ENCODE measurements at regions of chr10 and their contacts with region 1.

Region 1: DNA sequence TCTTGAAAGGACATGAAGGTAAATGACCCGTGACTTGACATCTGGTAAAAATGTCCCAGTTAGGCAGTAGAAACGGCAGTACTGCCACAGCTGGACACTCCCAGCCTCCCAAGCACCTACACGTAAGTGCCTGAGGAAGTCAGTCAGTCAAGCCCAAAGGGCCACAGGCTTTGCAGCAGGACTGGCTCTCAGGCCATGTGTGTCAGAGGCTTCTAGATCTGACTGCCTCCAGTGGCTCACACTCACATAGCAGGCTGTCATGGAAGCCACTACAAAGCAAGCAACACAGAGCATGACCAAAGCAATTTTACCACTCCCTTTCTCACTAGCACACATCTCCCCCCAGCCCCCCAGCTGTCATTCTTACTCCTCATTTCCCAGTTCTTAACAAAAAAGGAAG is 17.8 kb upstream of the CCNJ start:
- DNase-seq: peak; percentile 18 to 46
- ATAC-seq: peak; percentile 97 to 98
- H3K4me3 ChIP-seq: no peak overlapping the region
- H3K27ac ChIP-seq: no peak overlapping the region
- H3K4me1 ChIP-seq: no peaks in the 10 kb centered on the region
- CTCF ChIP-seq: no peak
- EP300 ChIP-seq: no peak
- POLR2A ChIP-seq: no peak
- RAD21 ChIP-seq: no peak

Region 2: DNA sequence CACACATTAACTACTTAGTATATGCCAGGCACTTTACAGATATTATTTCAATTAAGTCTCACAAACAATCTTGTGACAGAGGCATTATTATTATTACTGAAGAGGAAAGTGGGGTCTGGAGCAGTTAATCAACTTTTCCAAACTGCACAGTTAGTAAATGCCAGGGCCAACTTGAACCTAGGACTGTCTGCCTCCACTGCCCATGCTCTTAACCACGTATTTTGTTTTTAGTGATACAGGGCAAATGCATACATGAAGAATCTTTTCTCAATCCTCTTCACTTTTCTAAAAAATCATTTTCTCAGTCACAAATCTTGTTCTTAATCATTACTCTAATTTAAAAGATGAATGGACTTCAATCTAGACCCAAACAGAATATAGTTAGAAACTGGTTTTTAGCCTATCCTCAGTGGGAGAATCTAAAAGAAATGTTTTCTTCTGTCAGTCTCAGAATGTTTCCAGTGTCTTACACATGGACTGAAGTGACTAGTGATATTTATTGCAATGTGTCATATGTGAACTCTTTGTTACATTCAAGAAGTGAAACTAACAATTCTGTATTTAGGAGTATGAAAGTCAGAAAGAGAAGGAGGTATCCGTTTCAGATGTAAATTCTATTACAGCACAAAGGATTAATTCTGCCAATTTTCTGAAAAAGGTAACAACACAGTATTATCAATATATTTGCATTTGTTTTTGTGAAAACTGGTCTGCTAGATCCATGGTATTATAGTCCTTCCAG is 37.7 kb before region 1 on chr10:
- CTCF ChIA-PET with region 1: no interaction called
- POLR2A ChIA-PET with region 1: no interaction called
- DNase-seq: no peak
- ATAC-seq: no peak
- H3K4me3 ChIP-seq: no peak overlapping the region
- H3K27ac ChIP-seq: no peak overlapping the region
- H3K4me1 ChIP-seq: no peaks in the 10 kb centered on the region
- CTCF ChIP-seq: no peak
- EP300 ChIP-seq: no peak
- POLR2A ChIP-seq: no peak
- RAD21 ChIP-seq: no peak

Region 3: DNA sequence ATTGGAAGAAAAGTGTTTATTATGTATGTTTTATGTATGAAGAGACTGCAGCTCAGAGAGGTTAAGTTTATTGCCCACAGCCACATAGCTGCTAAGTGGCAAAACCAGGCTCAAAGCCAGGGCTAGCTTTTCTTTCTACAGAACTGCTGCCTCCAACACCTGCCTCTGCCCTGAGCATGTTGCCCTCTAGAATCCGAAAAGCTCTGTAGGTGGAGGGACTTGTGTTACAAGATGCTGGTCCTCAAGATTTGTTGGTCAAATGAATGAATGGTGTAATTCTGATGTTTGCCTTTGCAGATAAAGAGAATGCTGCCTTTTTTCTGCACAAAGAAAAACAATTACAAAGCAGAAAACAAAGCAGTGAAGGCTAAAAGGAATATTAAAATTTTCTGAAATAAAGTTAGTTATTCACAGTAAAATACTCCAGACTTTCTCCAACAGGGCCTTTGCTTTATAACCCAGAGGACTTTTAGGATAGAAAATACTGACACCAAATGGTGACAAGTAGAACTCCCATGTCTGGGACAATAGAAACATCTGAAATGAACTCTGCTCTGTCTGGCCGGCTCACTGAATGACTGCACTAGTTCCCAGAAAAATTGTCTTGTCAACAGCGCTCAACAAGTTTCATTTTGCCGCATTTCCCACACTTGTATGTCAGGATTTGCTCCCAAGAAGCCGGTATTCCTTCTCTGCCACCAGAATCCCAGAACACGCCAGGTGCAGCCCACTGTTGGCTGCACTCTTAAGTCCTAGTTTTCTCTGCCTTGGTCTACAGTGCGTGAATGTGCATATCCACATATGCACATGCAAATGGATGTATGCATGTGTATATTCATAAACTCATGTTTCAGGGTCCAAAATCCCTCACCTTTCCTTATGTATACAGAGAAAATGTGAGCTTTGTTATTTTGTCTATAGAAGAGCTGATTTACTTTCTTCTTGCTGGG is 267.7 kb after region 1 on chr10:
- CTCF ChIA-PET with region 1: interaction called, 148 read pairs
- POLR2A ChIA-PET with region 1: no interaction called
- DNase-seq: peak; percentile 35 to 59
- ATAC-seq: peak; percentile 95 to 96
- H3K4me3 ChIP-seq: no peak overlapping the region
- H3K27ac ChIP-seq: no peak overlapping the region
- H3K4me1 ChIP-seq: peaks cover 2% of the 10 kb centered on the region
- CTCF ChIP-seq: peak; percentile 65
- EP300 ChIP-seq: no peak
- POLR2A ChIP-seq: no peak
- RAD21 ChIP-seq: peak; percentile 66 to 73

Measured in A549 (cell line).